ENCODE measurements at regions of chr19 and their contacts with region 1.

Region 1: DNA sequence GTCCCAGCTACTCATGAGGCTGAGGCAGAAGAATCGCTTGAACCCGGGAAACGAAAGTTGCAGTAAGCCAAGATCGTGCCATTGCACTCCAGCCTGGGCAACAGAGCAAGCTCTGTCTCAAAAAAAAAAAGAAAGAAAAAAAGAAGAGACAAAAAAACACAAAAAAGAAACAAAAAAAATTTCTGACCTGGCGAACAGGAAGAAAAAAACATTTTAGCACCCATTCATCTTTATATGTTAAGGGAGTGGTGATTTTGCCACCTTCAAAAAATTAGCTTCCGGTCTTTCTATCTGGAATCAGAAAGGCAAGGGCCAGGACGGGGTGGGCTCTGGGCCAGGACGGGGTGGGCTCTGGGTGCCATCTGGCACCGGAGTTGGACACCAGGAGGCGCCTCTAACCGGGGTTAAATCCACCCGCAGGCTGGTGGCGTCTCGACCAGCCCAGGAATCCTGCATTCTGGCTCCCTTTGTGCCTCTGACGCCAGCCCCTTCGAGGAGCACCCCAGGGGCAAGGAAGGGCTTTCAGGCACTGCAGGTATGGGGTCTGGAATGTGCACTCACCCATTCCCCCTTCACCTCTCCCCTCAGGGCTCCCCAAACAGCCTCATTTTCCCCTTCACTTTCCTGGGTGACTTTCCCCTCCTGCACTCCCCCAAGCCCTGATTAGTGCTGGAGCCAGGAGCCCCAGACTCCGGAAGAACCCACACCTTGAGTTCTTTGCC is 10.4 kb upstream of the ZSWIM4 start:
- DNase-seq: peak; percentile 44 to 86 (median 78)
- ATAC-seq: peak; percentile 65
- H3K4me3 ChIP-seq: no peak overlapping the region
- H3K4me3 Mint-ChIP-seq: peak overlapping the region; percentile 45
- H3K27ac ChIP-seq: no peak overlapping the region
- H3K27ac Mint-ChIP-seq: peak overlapping the region; percentile 63
- H3K4me1 ChIP-seq: peaks cover 35% of the 10 kb centered on the region
- H3K4me1 Mint-ChIP-seq: peaks cover 31% of the 10 kb centered on the region
- H3K27me3 ChIP-seq: no peaks in the 10 kb centered on the region
- H3K27me3 Mint-ChIP-seq: no peaks in the 10 kb centered on the region
- CTCF ChIP-seq: peak; percentile 73

Region 2: GRCh38 chr19:13774217-13775191 is 10.4 kb before region 1 on chr19 and contains the start of gene C19orf53:
- CTCF ChIA-PET with region 1: interaction called, 19 read pairs
- POLR2A ChIA-PET with region 1: interaction called, 24 read pairs
- intact Hi-C with region 1: no loop called
- DNase-seq: peak; percentile 66 to 94 (median 87)
- ATAC-seq: peak; percentile 96
- H3K4me3 ChIP-seq: peak within 1 kb of the TSS; percentile 89 to 91
- H3K4me3 Mint-ChIP-seq: peak within 1 kb of the TSS; percentile 99
- H3K27ac ChIP-seq: peak within 1 kb of the TSS; percentile 83 to 85
- H3K27ac Mint-ChIP-seq: peak within 1 kb of the TSS; percentile 97
- H3K4me1 ChIP-seq: peaks cover 17% of the 10 kb centered on the region
- H3K4me1 Mint-ChIP-seq: peaks cover 25% of the 10 kb centered on the region
- H3K27me3 ChIP-seq: no peaks in the 10 kb centered on the region
- H3K27me3 Mint-ChIP-seq: no peaks in the 10 kb centered on the region
- CTCF ChIP-seq: no peak
- total RNA-seq, gene C19orf53: 116 TPM

Region 3: DNA sequence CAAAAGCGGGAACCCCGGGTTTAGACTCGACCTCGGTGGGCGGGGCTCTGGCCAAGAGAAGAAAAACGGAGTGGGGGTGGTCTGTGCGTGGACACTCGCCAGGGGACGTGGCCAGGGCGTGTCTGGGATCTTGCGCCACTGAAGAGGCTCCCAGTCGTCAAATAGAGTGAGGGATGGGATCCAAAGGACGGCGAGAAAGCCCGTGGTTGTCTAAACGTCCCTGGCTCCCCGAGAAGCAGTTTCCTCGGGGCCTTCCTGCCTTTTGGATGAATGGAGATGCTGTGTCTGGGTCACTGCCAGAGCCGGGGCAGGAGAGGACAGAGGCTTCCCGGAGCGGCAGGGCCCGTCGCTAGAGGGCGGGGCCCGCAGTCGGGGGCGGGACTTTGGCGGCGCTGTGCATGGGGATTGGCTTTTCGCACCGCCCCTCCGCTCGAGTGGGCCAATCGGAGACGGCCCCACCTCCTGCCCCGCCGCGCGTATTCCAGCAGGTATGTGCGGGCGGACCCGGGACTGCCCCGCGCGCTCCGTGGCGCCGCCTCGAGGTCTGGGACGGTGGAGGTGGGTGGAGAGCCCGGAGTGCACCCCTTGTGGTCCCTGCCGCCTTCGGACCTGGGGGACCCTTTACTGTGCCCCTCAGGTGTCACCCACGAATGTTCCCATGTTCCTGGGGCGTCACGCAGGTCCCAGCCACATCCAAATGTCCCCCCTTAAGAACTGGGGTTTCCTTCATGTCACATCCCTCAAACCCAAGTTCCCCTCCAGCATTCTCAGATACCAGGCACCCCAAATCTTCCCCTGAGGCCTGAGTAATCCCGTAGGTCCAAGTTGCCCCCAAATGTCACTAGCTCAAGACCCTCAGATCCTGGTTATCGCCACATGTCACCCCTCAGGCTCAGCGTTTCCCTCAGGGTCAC is 48.7 kb after region 1 on chr19:
- CTCF ChIA-PET with region 1: interaction called, 15 read pairs
- POLR2A ChIA-PET with region 1: interaction called, 6 read pairs
- intact Hi-C with region 1: no loop called
- DNase-seq: peak; percentile 83 to 97 (median 93)
- ATAC-seq: peak; percentile 84
- H3K4me3 ChIP-seq: peak overlapping the region; percentile 64 to 82
- H3K4me3 Mint-ChIP-seq: peak overlapping the region; percentile 86
- H3K27ac ChIP-seq: peak overlapping the region; percentile 53 to 80
- H3K27ac Mint-ChIP-seq: peak overlapping the region; percentile 86
- H3K4me1 ChIP-seq: peaks cover 44% of the 10 kb centered on the region
- H3K4me1 Mint-ChIP-seq: peaks cover 38% of the 10 kb centered on the region
- H3K27me3 ChIP-seq: no peaks in the 10 kb centered on the region
- H3K27me3 Mint-ChIP-seq: no peaks in the 10 kb centered on the region
- CTCF ChIP-seq: peak; percentile 72

Region 4: DNA sequence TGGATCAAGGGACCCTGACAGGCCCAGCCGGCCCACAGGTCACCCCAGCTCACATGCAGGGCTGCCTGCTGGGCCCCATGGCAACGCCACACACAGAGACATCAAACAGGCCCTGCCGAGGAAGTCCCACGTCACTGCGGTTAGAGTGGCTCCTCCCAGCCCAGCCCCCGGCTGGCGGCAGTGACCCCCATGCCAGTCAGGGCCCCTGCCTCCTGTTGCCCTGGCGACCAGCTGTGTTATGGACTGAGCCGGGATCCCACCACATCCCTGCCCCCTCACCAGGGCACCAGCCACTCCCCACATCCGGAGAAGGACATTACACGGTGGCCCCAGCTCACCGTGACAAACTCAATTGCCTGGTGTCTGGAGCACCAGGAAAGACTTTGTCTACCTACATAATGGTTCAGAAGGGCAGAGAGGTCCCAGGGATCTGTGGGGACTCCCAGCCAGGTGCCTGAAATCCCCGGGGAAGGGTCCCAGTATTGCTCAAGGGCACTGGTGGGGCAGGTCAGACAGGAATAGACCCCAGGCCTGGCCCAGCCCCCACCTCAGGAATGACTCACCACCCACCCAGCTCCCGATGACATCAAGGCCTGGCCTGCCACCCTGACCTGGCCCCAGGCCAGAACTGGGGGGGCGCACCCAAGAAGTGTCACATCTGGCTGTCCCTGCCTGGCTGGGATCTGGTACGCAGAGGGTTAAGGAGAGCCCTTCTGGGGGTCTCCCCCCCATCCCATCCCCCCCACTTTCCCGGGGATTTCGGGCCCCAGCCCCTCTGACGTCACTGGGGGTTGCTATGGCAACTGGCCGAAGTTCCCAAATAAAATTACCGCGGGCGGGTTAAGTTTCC is 61.9 kb after region 1 on chr19:
- CTCF ChIA-PET with region 1: interaction called, 43 read pairs
- POLR2A ChIA-PET with region 1: interaction called, 15 read pairs
- intact Hi-C with region 1: loop called (anchors 1 to 5 kb)
- DNase-seq: peak; percentile 90 to 99 (median 97)
- ATAC-seq: peak; percentile 54
- H3K4me3 ChIP-seq: peak overlapping the region; percentile 55 to 68
- H3K4me3 Mint-ChIP-seq: peak overlapping the region; percentile 89
- H3K27ac ChIP-seq: peak overlapping the region; percentile 98 to 99
- H3K27ac Mint-ChIP-seq: peak overlapping the region; percentile 100
- H3K4me1 ChIP-seq: peaks cover 65% of the 10 kb centered on the region
- H3K4me1 Mint-ChIP-seq: peaks cover 56% of the 10 kb centered on the region
- H3K27me3 ChIP-seq: no peaks in the 10 kb centered on the region
- H3K27me3 Mint-ChIP-seq: no peaks in the 10 kb centered on the region
- CTCF ChIP-seq: no peak

Region 5: GRCh38 chr19:13920940-13921761 is 136.3 kb after region 1 on chr19:
- CTCF ChIA-PET with region 1: no interaction called
- POLR2A ChIA-PET with region 1: no interaction called
- intact Hi-C with region 1: no loop called
- DNase-seq: peak in 3 of 9 experiments; percentile 39 to 59 (median 45)
- ATAC-seq: peak; percentile 75
- H3K4me3 ChIP-seq: no peak overlapping the region
- H3K4me3 Mint-ChIP-seq: no peak overlapping the region
- H3K27ac ChIP-seq: no peak overlapping the region
- H3K27ac Mint-ChIP-seq: no peak overlapping the region
- H3K4me1 ChIP-seq: no peaks in the 10 kb centered on the region
- H3K4me1 Mint-ChIP-seq: no peaks in the 10 kb centered on the region
- H3K27me3 ChIP-seq: no peaks in the 10 kb centered on the region
- H3K27me3 Mint-ChIP-seq: no peaks in the 10 kb centered on the region
- CTCF ChIP-seq: no peak

Measured in CD8-positive, alpha-beta T cell (primary cell).